B cell (primary cell): ENCODE measurements at regions of chr6 and their contacts with region 1.

Region 1: DNA sequence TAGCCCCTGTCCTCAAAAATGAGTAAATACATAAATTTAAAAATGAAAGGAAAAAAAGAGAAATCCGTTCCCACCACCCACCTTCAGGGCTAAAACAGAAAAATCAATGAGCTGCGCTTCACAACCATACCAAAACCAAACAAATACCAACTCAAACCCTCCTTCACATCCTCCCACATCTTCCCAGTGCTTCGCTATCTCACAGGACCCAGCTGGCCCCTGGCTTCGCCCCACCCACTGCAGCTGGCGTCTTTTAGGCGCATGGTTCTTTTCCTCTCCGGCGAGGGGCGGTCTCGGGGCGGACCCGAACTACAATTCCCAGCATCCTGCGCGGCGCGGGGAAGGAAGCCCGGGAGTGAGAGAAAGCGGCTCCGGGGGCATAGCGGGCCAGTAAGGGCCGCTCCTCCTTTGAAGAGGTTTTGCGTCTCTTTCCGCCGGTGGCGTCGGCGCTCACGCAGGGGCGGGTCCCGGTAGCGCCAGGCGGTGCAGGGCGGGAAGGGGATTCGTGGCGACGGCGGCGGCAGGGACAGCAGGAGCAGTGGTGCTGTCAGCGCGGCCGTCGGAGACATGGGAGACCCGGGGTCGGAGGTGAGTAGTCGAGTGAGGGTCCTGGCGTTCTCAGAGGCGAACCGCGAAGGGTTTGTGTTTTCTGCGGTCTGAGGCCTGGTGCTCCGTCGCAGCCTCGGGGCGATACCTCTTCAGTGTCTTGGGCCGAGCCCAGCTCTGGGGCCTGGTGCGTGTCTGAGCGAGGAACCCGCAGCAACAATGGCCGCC is at the start of gene ZNF451:
- DNase-seq: peak; percentile 96
- ATAC-seq: peak; percentile 94
- H3K4me3 ChIP-seq: peak within 1 kb of the TSS; percentile 50 to 66 (median 58)
- H3K4me3 Mint-ChIP-seq: peak within 1 kb of the TSS; percentile 85
- H3K27ac ChIP-seq: peak within 1 kb of the TSS; percentile 64 to 81
- H3K27ac Mint-ChIP-seq: peak within 1 kb of the TSS; percentile 94
- H3K4me1 ChIP-seq: peaks cover 11 to 14% of the 10 kb centered on the region in 2 donors
- H3K4me1 Mint-ChIP-seq: peaks cover 29% of the 10 kb centered on the region
- H3K27me3 ChIP-seq: no peaks in the 10 kb centered on the region
- H3K27me3 Mint-ChIP-seq: no peaks in the 10 kb centered on the region
- CTCF ChIP-seq: no peak
- total RNA-seq, gene ZNF451: 86.3 and 106 TPM in 2 replicates

Region 2: GRCh38 chr6:56963793-56964192 is 126.1 kb before region 1 on chr6:
- CTCF ChIA-PET with region 1: no interaction called
- POLR2A ChIA-PET with region 1: no interaction called
- intact Hi-C with region 1: no loop called
- DNase-seq: no peak
- ATAC-seq: no peak
- H3K4me3 ChIP-seq: no peak overlapping the region
- H3K4me3 Mint-ChIP-seq: no peak overlapping the region
- H3K27ac ChIP-seq: no peak overlapping the region
- H3K27ac Mint-ChIP-seq: no peak overlapping the region
- H3K4me1 ChIP-seq: no peaks in the 10 kb centered on the region
- H3K4me1 Mint-ChIP-seq: no peaks in the 10 kb centered on the region
- H3K27me3 ChIP-seq: peaks cover 0 to 8% (median 2%) of the 10 kb centered on the region in 4 experiments
- H3K27me3 Mint-ChIP-seq: peaks cover 21% of the 10 kb centered on the region
- CTCF ChIP-seq: no peak

Region 3: DNA sequence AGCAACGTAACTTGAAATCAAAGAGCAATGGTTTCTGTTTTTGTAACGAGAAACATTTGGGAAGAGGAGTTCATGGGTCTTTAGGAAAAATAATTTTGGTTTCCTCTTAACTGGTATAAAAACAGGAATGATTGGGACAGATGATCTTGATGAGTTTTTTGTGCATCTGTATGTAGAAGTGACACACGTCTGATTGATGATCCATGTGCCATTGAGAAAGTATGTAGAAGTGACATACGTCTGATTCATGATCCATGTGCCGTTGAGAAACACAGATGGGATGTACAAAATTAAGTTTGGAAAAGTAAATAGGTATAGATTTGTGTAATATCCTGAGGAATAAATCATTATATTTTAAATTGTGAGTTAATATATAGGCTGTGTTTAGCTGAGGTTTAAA is 41.3 kb before region 1 on chr6:
- CTCF ChIA-PET with region 1: no interaction called
- POLR2A ChIA-PET with region 1: no interaction called
- intact Hi-C with region 1: loop called (anchors 2 kb)
- DNase-seq: no peak
- ATAC-seq: no peak
- H3K4me3 ChIP-seq: no peak overlapping the region
- H3K4me3 Mint-ChIP-seq: peak overlapping the region; percentile 18
- H3K27ac ChIP-seq: no peak overlapping the region
- H3K27ac Mint-ChIP-seq: no peak overlapping the region
- H3K4me1 ChIP-seq: peaks cover 4 to 5% of the 10 kb centered on the region in 2 donors
- H3K4me1 Mint-ChIP-seq: peaks cover 19% of the 10 kb centered on the region
- H3K27me3 ChIP-seq: no peaks in the 10 kb centered on the region
- H3K27me3 Mint-ChIP-seq: no peaks in the 10 kb centered on the region
- CTCF ChIP-seq: no peak

Region 4: DNA sequence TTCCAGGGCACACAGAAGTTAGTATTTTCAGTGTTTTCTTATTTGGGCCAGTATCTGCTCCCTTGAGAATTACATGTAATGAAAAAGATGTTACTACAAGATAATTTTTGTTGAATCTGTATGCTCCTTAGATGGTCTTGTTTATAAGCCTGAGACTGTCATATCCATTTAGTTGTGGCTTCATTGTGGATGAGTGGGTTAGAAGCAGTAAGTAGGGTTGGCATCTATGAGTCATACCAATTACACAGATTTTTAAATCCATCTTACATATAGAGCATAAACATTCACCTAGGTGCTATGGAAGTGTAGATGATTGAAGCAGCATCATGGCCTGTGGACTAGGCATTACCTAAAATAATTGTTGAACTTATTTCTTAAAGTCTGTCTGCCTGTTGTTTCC is 68.8 kb after region 1 on chr6:
- CTCF ChIA-PET with region 1: no interaction called
- POLR2A ChIA-PET with region 1: no interaction called
- intact Hi-C with region 1: no loop called
- DNase-seq: no peak
- ATAC-seq: no peak
- H3K4me3 ChIP-seq: no peak overlapping the region
- H3K4me3 Mint-ChIP-seq: no peak overlapping the region
- H3K27ac ChIP-seq: no peak overlapping the region
- H3K27ac Mint-ChIP-seq: no peak overlapping the region
- H3K4me1 ChIP-seq: no peaks in the 10 kb centered on the region
- H3K4me1 Mint-ChIP-seq: no peaks in the 10 kb centered on the region
- H3K27me3 ChIP-seq: no peaks in the 10 kb centered on the region
- H3K27me3 Mint-ChIP-seq: no peaks in the 10 kb centered on the region
- CTCF ChIP-seq: no peak